ENCODE measurements at regions of chr4 and their contacts with region 1.

Region 1: GRCh38 chr4:170259631-170260153 is 169.9 kb upstream of the AADAT start:
- DNase-seq: peak; percentile 12
- H3K4me3 Mint-ChIP-seq: no peak overlapping the region
- H3K27ac Mint-ChIP-seq: no peak overlapping the region
- H3K4me1 Mint-ChIP-seq: no peaks in the 10 kb centered on the region
- H3K27me3 Mint-ChIP-seq: no peaks in the 10 kb centered on the region

Region 2: GRCh38 chr4:170138580-170139194 is 121.0 kb before region 1 on chr4:
- intact Hi-C with region 1: loop called (anchors 1 kb)
- DNase-seq: peak; percentile 34
- H3K4me3 Mint-ChIP-seq: no peak overlapping the region
- H3K27ac Mint-ChIP-seq: no peak overlapping the region
- H3K4me1 Mint-ChIP-seq: no peaks in the 10 kb centered on the region
- H3K27me3 Mint-ChIP-seq: no peaks in the 10 kb centered on the region

Region 3: DNA sequence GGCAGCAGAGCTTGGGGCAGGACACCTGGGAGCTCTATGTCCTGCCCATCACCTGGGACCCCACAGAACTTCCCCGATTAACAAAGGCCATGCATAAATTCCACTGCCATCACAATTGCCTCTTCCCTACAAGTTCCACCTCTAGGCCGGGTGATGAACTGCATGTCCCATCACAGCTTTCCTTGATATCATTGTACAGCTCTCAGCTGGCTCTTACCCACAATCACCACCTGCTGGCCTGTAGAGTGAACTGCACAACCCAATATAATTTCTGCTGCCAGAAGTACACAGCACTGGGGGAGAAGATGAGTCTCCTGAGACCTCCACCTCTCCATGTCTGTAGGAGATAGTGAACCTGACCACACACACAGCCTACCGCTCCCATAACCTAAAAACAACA is 115.1 kb after region 1 on chr4:
- intact Hi-C with region 1: loop called (anchors 5 kb)
- DNase-seq: no peak
- H3K4me3 Mint-ChIP-seq: no peak overlapping the region
- H3K27ac Mint-ChIP-seq: no peak overlapping the region
- H3K4me1 Mint-ChIP-seq: no peaks in the 10 kb centered on the region
- H3K27me3 Mint-ChIP-seq: no peaks in the 10 kb centered on the region

Measured in activated T-helper 1 cell treated with anti-CD3 and anti-CD28 coated beads, Interleukin-12 subunit alpha, Interleukin-12 subunit beta, Interleukin-2, Interleukin-4 antibody, amounts not matched to agents 30 ng/mL and 10 ng/mL and 1 ng/mL, durations not matched to agents 14 hours and 24 hours and 36 hours (primary cell).